Activated CD8-positive, alpha-beta T cell treated with anti-CD3 and anti-CD28 coated beads, Interleukin-2, amount 10 ng/mL, durations not matched to agents 7 days and 5 days (primary cell): ENCODE measurements at regions of chr17 and their contacts with region 1.

Region 1: DNA sequence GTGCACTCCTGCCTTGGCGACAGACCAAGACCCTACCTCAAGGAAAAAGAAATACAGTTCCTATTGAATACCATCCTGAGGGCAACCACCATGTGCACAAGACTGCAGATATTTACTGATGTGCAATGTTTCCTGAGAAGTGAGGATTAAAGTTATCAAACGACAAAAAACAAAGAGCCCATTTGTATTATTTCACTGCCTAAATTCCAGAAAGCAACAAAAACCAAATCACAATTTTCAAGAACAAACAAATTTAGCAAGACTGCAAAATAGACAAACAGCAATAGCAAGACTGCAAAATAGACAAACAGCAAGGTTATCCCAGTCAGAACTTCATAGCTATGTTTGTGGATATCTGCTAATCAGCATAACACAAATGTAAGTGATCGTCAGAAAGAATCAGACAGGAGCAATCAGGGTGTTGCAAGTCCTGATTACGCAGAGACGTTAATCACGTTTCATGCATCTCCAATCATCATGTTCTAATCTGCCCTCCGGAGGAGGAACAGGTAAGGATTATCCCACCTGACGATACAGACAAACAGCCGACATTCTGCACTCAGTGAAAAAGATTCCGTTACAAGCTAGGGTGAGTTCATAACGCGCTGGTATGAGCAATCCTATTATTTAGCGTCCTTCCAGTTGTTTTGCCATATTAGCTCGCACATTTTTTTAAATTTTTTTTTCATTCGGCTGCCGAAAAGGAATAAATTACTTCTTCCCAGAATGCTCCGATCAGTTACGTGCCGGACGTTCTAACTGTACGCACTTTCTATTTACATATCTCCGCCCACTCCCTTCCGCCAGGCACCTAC is 2.9 kb downstream of the TMEM107 start:
- DNase-seq: peak; percentile 90
- ATAC-seq: peak; percentile 79
- H3K4me3 Mint-ChIP-seq: peak overlapping the region; percentile 85
- H3K27ac Mint-ChIP-seq: peak overlapping the region; percentile 99
- H3K4me1 Mint-ChIP-seq: peaks cover 50% of the 10 kb centered on the region
- H3K27me3 Mint-ChIP-seq: no peaks in the 10 kb centered on the region

Region 2: GRCh38 chr17:8125157-8125946 is 47.9 kb before region 1 on chr17:
- CTCF ChIA-PET with region 1: interaction called, 5 read pairs
- POLR2A ChIA-PET with region 1: interaction called, 52 read pairs
- DNase-seq: peak; percentile 90
- ATAC-seq: peak; percentile 35
- H3K4me3 Mint-ChIP-seq: peak overlapping the region; percentile 88
- H3K27ac Mint-ChIP-seq: peak overlapping the region; percentile 88
- H3K4me1 Mint-ChIP-seq: peaks cover 57% of the 10 kb centered on the region
- H3K27me3 Mint-ChIP-seq: peaks cover 44% of the 10 kb centered on the region

Region 3: DNA sequence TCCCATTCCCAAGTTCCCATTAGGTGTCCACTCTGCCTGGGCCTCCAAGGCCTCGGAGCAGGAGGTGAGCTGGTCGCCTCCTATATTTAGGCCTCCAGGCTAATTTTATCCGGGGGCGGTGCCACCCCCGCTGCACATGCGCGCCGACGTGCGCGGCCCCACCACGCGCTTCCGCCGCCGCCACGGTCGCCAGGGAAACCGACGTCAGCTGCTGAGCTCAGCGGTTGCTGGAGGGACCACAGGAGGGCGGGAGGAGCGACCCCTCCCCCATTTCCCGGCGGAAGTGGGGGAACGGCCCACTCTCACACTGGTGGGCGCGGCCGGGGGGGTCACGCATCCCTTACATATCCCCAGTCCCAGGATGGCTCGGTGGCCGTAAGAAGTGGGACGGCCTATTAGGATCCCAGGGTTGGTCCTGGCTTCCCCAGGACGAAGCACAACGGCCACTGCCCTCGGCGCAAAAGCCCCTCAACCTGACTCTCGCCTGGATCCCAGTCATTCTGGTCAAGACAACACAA is 22.1 kb before region 1 on chr17:
- CTCF ChIA-PET with region 1: interaction called, 3 read pairs
- POLR2A ChIA-PET with region 1: interaction called, 164 read pairs
- DNase-seq: peak; percentile 93
- ATAC-seq: peak; percentile 42
- H3K4me3 Mint-ChIP-seq: peak overlapping the region; percentile 85
- H3K27ac Mint-ChIP-seq: peak overlapping the region; percentile 91
- H3K4me1 Mint-ChIP-seq: peaks cover 15% of the 10 kb centered on the region
- H3K27me3 Mint-ChIP-seq: no peaks in the 10 kb centered on the region

Region 4: GRCh38 chr17:8189711-8190477 is 16.6 kb after region 1 on chr17 and contains the start of gene BORCS6:
- CTCF ChIA-PET with region 1: interaction called, 7 read pairs
- POLR2A ChIA-PET with region 1: interaction called, 212 read pairs
- DNase-seq: peak; percentile 98
- ATAC-seq: peak; percentile 68
- H3K4me3 Mint-ChIP-seq: no peak within 1 kb of the TSS
- H3K27ac Mint-ChIP-seq: peak within 1 kb of the TSS; percentile 93
- H3K4me1 Mint-ChIP-seq: peaks cover 11% of the 10 kb centered on the region
- H3K27me3 Mint-ChIP-seq: no peaks in the 10 kb centered on the region
- total RNA-seq, gene BORCS6: 12.7 TPM

Region 5: GRCh38 chr17:8222630-8223356 is 49.5 kb after region 1 on chr17:
- CTCF ChIA-PET with region 1: no interaction called
- POLR2A ChIA-PET with region 1: interaction called, 64 read pairs
- DNase-seq: peak; percentile 92
- ATAC-seq: peak; percentile 49
- H3K4me3 Mint-ChIP-seq: peak overlapping the region; percentile 92
- H3K27ac Mint-ChIP-seq: peak overlapping the region; percentile 98
- H3K4me1 Mint-ChIP-seq: peaks cover 58% of the 10 kb centered on the region
- H3K27me3 Mint-ChIP-seq: peaks cover 2% of the 10 kb centered on the region

Region 6: DNA sequence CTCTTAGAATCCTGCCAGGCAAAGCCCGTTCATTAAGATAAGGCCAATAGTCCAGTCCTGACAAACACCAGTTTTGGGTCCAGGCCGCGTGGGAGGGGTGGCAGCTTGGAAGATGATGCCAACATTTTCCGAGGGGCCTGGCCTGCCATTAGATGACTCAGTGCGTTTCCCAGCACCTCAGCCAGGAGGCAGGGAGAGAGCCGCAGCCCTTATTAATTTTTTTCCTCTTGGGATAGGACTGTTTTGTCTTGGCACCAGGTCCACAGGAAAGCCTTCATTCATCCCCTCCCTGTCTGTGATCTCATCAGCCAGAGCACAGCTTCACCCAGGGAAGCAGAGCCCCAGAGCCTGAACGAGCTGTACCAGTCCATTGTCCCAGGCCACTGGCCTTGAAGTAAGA is 257.7 kb after region 1 on chr17:
- CTCF ChIA-PET with region 1: no interaction called
- POLR2A ChIA-PET with region 1: no interaction called
- DNase-seq: no peak
- ATAC-seq: no peak
- H3K4me3 Mint-ChIP-seq: no peak overlapping the region
- H3K27ac Mint-ChIP-seq: no peak overlapping the region
- H3K4me1 Mint-ChIP-seq: peaks cover 4% of the 10 kb centered on the region
- H3K27me3 Mint-ChIP-seq: peaks cover 4% of the 10 kb centered on the region